Ascending aorta (tissue), 2 donors: ENCODE measurements at regions of chr4 and their contacts with region 1.

Region 1: DNA sequence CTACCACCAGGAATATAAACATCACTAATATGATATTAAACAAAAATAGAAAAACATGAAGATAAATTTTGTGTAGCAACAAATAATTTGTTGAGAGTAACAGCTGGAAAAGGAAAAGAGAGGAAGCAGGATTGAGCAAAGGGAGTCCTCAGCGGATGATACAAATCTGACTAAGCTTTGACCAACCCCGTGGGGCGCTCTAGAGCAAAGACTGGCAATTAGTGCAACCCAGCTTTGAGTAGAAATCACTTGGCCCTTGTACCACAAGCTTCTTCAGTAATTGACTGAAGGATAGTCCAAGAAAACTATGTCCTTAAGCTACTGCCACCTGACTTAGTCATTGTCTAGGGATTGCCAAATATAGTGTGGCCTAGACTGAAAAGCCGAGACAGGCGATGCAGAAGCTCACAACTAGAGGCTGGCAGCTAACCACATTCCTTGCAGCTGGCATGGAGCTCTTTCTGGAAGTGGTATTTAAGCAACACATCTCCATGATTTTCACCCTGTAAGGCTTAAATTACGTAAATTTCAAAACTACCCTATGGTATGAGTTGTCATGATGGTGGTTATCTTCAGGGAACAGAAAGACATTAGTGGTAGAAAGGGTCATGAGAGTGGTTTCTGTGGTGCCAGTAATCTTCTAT is 396.0 kb downstream of the PDGFC start:
- DNase-seq: no peak
- H3K4me3 ChIP-seq: no peak overlapping the region
- H3K27ac ChIP-seq: peak overlapping the region in 1 of 2 donors; percentile 31
- H3K4me1 ChIP-seq: no peaks in the 10 kb centered on the region
- H3K27me3 ChIP-seq: no peaks in the 10 kb centered on the region
- CTCF ChIP-seq: no peak

Region 2: DNA sequence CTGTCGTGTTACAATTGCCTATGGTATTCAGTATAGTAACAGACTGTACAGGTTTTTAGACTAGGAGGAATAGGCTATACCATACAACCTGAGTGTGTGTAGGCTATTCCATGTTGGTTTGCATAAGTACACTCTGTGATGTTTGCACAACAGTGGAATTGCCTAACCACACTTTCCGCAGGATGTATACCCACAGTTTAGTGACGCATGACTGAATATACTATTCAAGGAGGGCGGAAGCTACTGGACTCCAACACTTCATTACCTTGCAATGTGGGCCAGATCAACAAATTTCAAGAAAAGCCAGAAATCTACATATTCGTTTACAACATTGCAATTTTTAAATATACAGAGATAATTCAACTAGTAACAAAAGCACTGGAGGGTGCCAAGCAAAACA is 78.9 kb after region 1 on chr4:
- intact Hi-C with region 1: no loop called
- DNase-seq: no peak
- H3K4me3 ChIP-seq: no peak overlapping the region
- H3K27ac ChIP-seq: no peak overlapping the region
- H3K4me1 ChIP-seq: no peaks in the 10 kb centered on the region
- H3K27me3 ChIP-seq: no peaks in the 10 kb centered on the region
- CTCF ChIP-seq: no peak

Region 3: GRCh38 chr4:157315968-157316367 is 740.4 kb after region 1 on chr4:
- intact Hi-C with region 1: loop called (anchors 5 kb)
- DNase-seq: no peak
- H3K4me3 ChIP-seq: no peak overlapping the region
- H3K27ac ChIP-seq: no peak overlapping the region
- H3K4me1 ChIP-seq: peaks cover 0 to 4% of the 10 kb centered on the region in 2 donors
- H3K27me3 ChIP-seq: no peaks in the 10 kb centered on the region
- CTCF ChIP-seq: no peak